BJ (cell line): ENCODE measurements at regions of chr1 and their contacts with region 1.

Region 1: DNA sequence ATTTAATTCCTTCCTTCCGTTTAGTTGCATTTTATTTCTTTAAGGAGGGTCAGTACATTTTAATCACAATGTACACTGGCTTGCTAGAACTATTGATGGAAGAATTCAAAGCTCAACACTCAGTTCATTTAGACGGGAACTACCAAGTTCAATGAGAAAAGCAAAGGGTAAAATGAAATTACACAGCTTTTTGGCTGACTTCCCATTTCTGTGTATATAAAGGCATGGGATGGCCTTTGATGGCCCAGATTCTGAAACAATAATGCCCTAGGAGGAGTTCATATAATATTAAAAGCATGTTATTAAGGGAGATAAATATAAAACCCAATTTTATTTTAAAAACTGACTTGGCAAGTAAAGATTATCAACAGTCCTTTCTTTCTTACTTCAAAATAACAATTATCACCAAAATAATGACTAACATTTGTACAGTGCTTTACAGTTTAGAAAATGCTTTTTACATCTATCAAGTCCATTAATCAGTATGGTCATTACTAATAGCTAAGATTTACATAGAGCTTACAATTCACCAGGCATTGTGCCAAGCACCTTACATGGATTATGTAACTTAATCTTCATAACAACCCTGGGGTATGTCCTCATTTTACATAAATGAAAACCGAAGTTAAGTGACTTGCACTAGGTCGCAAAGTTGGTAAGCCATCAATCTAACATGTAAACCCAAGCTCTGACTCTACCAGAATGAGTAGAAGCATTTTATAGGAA is 402.4 kb downstream of the OMA1 start:
- DNase-seq: no peak
- H3K4me3 ChIP-seq: no peak overlapping the region
- H3K27me3 ChIP-seq: no peaks in the 10 kb centered on the region
- CTCF ChIP-seq: no peak

Region 2: GRCh38 chr1:58180537-58180936 is 36.4 kb after region 1 on chr1:
- CTCF ChIA-PET with region 1: no interaction called
- POLR2A ChIA-PET with region 1: interaction called, 20 read pairs
- DNase-seq: no peak
- H3K4me3 ChIP-seq: no peak overlapping the region
- H3K27me3 ChIP-seq: no peaks in the 10 kb centered on the region
- CTCF ChIP-seq: no peak